A673 (cell line): ENCODE measurements at regions of chr4 and their contacts with region 1.

Region 1: GRCh38 chr4:161178310-161178709 is 985.5 kb downstream of the FSTL5 start:
- DNase-seq: no peak
- H3K4me3 ChIP-seq: no peak overlapping the region
- H3K27ac ChIP-seq: no peak overlapping the region
- H3K4me1 ChIP-seq: no peaks in the 10 kb centered on the region
- H3K27me3 ChIP-seq: no peaks in the 10 kb centered on the region
- CTCF ChIP-seq: no peak

Region 2: DNA sequence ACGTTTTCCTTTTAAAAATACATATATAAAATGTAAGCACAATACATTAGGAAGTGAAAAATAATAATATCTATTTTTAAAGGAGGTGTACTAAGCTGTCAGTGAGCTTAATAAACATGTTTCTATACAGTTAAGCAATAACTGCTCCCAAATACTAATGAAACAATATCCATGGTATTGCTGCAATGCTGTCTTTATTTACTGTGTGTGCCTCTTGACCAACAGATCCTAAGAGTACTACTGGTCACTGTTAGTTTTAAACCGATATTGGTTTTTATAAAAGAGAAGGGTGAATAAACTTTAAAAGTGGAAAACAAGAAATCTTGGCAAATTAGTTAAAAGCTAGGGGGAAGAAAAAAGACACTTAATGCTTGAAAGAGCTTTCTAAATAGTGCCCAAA is 43.5 kb before region 1 on chr4:
- CTCF ChIA-PET with region 1: interaction called, 13 read pairs
- POLR2A ChIA-PET with region 1: no interaction called
- intact Hi-C with region 1: no loop called
- DNase-seq: no peak
- H3K4me3 ChIP-seq: no peak overlapping the region
- H3K27ac ChIP-seq: no peak overlapping the region
- H3K4me1 ChIP-seq: no peaks in the 10 kb centered on the region
- H3K27me3 ChIP-seq: no peaks in the 10 kb centered on the region
- CTCF ChIP-seq: no peak